ENCODE measurements at regions of chr16 and their contacts with region 1.

Region 1: GRCh38 chr16:48526058-48526957 is 83.7 kb downstream of the N4BP1 start:
- DNase-seq: no peak
- ATAC-seq: peak; percentile 29 to 58 (median 38)
- H3K4me3 ChIP-seq: no peak overlapping the region
- H3K27ac ChIP-seq: no peak overlapping the region
- H3K4me1 ChIP-seq: no peaks in the 10 kb centered on the region
- H3K27me3 ChIP-seq: no peaks in the 10 kb centered on the region
- CTCF ChIP-seq: no peak

Region 2: GRCh38 chr16:48231727-48232492 is 294.4 kb before region 1 on chr16:
- intact Hi-C with region 1: loop called in 1 of 2 experiments (anchors 10 kb)
- DNase-seq: no peak
- ATAC-seq: no peak
- H3K4me3 ChIP-seq: no peak overlapping the region
- H3K27ac ChIP-seq: no peak overlapping the region
- H3K4me1 ChIP-seq: no peaks in the 10 kb centered on the region
- H3K27me3 ChIP-seq: no peaks in the 10 kb centered on the region
- CTCF ChIP-seq: peak; percentile 21

Region 3: GRCh38 chr16:48462201-48462600 is 64.1 kb before region 1 on chr16:
- intact Hi-C with region 1: no loop called
- DNase-seq: no peak
- ATAC-seq: no peak
- H3K4me3 ChIP-seq: no peak overlapping the region
- H3K27ac ChIP-seq: no peak overlapping the region
- H3K4me1 ChIP-seq: peaks cover 7% of the 10 kb centered on the region
- H3K27me3 ChIP-seq: no peaks in the 10 kb centered on the region
- CTCF ChIP-seq: no peak

Region 4: GRCh38 chr16:48576927-48577326 is 50.6 kb after region 1 on chr16:
- intact Hi-C with region 1: no loop called
- DNase-seq: no peak
- ATAC-seq: no peak
- H3K4me3 ChIP-seq: no peak overlapping the region
- H3K27ac ChIP-seq: no peak overlapping the region
- H3K4me1 ChIP-seq: peaks cover 31% of the 10 kb centered on the region
- H3K27me3 ChIP-seq: no peaks in the 10 kb centered on the region
- CTCF ChIP-seq: no peak

Measured in psoas muscle (tissue), 8 donors.